ENCODE measurements at regions of chr1 and their contacts with region 1.

Region 1: DNA sequence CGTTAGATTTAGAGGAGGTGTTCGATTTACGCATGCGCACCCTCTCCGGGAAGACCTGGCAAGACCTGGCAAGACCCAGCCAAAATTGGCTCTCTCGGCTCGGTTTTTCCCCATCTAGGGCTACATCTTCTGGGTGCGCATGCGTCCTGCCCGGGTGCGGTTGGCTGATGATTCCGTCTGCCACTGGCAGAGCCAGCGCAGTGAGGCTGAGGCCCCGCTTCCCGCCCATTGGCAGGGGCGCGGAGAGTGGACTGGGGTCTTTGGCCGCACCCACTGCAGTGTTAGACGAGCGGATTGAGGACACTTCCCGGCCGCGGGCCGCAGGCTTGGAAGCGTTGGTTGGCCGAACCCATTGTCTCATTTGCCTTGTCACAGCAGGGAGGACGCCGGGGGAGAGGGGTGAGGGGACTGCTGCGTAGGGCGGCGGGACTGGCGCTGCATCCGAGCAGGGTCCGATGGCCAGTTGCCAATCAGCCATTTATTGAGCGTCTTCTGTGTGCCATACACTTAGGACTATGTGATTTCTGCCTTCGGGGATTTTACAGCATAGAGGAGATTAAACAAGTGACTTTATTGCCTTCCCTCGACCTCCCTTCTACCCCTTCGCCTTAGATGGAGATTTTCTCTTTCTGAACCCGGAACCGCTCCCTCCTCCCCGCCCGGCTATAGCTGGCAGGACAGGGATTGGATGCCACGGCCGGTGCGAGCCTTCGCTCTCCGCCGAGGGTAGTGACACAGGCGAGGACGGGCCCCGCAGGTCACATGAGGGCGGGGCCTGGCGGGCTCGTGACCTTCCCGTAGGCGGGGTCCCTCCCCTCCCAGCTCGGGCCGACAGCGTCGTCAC is 43.7 kb downstream of the MEF2D start:
- DNase-seq: peak; percentile 99
- ATAC-seq: peak; percentile 96
- H3K4me3 ChIP-seq: peak overlapping the region; percentile 55
- H3K27ac ChIP-seq: peak overlapping the region; percentile 97
- H3K4me1 ChIP-seq: peaks cover 2% of the 10 kb centered on the region
- H3K27me3 ChIP-seq: no peaks in the 10 kb centered on the region

Region 2: GRCh38 chr1:156500797-156501499 is 44.1 kb after region 1 on chr1:
- intact Hi-C with region 1: loop called in 3 of 4 experiments (anchors 2 to 5 kb)
- DNase-seq: peak; percentile 95 to 98 (median 98)
- ATAC-seq: peak; percentile 87 to 91
- H3K4me3 ChIP-seq: peak overlapping the region; percentile 82
- H3K27ac ChIP-seq: peak overlapping the region; percentile 99
- H3K4me1 ChIP-seq: peaks cover 40% of the 10 kb centered on the region
- H3K27me3 ChIP-seq: no peaks in the 10 kb centered on the region

Region 3: GRCh38 chr1:156591432-156592157 is 134.8 kb after region 1 on chr1 and contains the start of gene NAXE:
- intact Hi-C with region 1: loop called in 1 of 4 experiments (anchors 5 kb)
- DNase-seq: peak; percentile 75 to 90 (median 90)
- ATAC-seq: peak; percentile 95 to 96
- H3K4me3 ChIP-seq: peak within 1 kb of the TSS; percentile 74
- H3K27ac ChIP-seq: peak within 1 kb of the TSS; percentile 85
- H3K4me1 ChIP-seq: peaks cover 2% of the 10 kb centered on the region
- H3K27me3 ChIP-seq: no peaks in the 10 kb centered on the region
- total RNA-seq, gene NAXE: 95.0 to 111 (median 98.9) TPM

Region 4: GRCh38 chr1:156608036-156608674 is 151.3 kb after region 1 on chr1:
- intact Hi-C with region 1: loop called (anchors 5 kb)
- DNase-seq: no peak
- ATAC-seq: peak; percentile 90
- H3K4me3 ChIP-seq: no peak overlapping the region
- H3K27ac ChIP-seq: no peak overlapping the region
- H3K4me1 ChIP-seq: peaks cover 2% of the 10 kb centered on the region
- H3K27me3 ChIP-seq: no peaks in the 10 kb centered on the region

Measured in right cardiac atrium (tissue), 5 donors.